Caco-2 (cell line): ENCODE measurements at regions of chr10 and their contacts with region 1.

Region 1: DNA sequence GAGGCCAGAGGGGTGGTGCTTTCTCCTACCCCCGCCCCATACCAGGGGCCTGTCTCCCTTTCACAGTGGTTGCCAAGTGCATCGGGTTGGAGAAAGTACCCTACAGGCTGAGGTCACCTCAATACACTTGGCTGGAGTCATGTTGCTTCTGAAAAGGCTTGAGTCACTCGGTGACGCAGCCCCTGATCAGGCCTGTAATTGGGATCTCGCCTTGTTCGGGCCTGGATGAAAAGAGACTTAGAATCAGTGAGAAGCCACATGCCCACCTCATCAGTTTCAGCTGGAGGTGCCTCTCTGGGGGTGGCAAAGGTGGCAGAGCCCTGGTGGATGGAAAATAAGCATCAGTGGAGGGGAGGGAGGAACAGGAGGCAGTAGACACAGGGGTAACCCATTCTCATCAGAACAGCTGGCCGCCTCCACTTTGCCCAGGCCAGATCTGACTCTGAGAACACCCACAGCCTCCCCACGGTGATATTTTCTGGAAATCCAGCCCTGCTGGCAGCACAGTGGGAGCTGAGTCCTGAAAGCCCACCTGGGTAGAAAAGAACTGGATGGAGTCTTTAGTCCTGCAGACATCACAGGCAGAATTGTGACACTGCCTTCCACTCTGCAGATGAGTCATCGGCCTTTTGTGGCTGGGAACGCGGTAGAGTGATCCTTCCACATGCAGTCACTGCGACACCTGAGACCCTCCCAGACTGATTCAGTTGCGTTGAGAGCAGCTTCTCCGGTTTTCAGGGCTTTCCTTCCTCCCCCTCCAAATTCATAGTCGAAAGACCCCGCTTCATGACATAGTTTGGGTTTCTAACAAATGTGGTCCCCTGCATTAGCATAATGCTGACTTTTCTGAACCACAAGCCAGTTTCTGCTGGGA is 108.0 kb downstream of the GRK5 start:
- DNase-seq: peak; percentile 56 to 66
- H3K4me3 ChIP-seq: no peak overlapping the region
- H3K4me3 Mint-ChIP-seq: no peak overlapping the region
- H3K27ac Mint-ChIP-seq: peak overlapping the region; percentile 97
- H3K4me1 ChIP-seq: peaks cover 51% of the 10 kb centered on the region
- H3K4me1 Mint-ChIP-seq: peaks cover 48% of the 10 kb centered on the region
- H3K27me3 ChIP-seq: no peaks in the 10 kb centered on the region
- H3K27me3 Mint-ChIP-seq: no peaks in the 10 kb centered on the region
- CTCF ChIP-seq: no peak

Region 2: GRCh38 chr10:119416855-119417254 is 101.5 kb after region 1 on chr10:
- CTCF ChIA-PET with region 1: no interaction called
- POLR2A ChIA-PET with region 1: interaction called, 5 read pairs
- intact Hi-C with region 1: loop called (anchors 10 kb)
- DNase-seq: peak; percentile 68 to 72
- H3K4me3 ChIP-seq: no peak overlapping the region
- H3K4me3 Mint-ChIP-seq: no peak overlapping the region
- H3K27ac Mint-ChIP-seq: no peak overlapping the region
- H3K4me1 ChIP-seq: peaks cover 28% of the 10 kb centered on the region
- H3K4me1 Mint-ChIP-seq: peaks cover 14% of the 10 kb centered on the region
- H3K27me3 ChIP-seq: no peaks in the 10 kb centered on the region
- H3K27me3 Mint-ChIP-seq: no peaks in the 10 kb centered on the region
- CTCF ChIP-seq: peak; percentile 60 to 79